ENCODE measurements at regions of chr6 and their contacts with region 1.

Region 1: DNA sequence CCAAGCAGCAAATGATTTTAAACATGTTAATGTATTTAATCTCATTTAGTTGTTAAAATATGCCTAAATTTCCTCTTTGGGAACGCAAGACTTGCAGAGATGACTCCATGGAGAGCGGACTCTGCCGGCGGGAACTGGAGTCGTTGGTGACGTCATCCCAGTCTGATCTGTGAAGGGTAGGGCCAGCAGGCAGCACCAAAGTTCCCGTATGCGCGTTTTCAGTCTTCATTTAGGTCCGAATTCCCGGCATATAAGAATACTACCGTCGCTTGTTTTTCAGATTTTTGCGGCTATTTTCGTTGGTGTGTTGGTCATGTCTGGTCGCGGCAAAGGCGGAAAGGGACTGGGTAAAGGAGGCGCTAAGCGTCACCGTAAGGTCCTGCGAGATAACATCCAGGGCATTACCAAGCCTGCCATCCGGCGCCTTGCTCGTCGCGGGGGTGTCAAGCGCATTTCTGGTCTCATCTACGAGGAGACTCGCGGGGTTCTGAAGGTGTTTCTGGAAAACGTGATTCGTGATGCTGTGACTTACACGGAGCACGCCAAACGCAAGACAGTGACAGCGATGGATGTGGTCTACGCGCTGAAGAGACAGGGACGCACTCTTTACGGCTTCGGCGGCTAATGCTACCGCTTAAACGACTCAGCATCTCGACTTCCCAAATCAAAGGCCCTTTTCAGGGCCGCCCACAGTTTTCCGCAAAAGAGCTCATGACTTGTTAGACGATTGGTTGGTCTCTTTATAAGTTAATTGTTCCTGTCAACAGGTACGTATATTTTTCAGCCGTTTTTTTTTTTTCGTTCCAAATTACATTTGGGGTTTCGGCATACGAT is 117.3 kb downstream of the HFE start:
- DNase-seq: peak; percentile 95
- H3K4me3 ChIP-seq: peak overlapping the region; percentile 60 to 77 (median 64)
- H3K27ac ChIP-seq: peak overlapping the region; percentile 93 to 100 (median 97)
- H3K4me1 ChIP-seq: peaks cover 0 to 25% (median 13%) of the 10 kb centered on the region in 4 donors
- H3K27me3 ChIP-seq: no peaks in the 10 kb centered on the region
- CTCF ChIP-seq: peak in 4 of 5 experiments; percentile 15 to 55 (median 33)
- EP300 ChIP-seq: peak; percentile 79
- POLR2A ChIP-seq: peak; percentile 100

Region 2: DNA sequence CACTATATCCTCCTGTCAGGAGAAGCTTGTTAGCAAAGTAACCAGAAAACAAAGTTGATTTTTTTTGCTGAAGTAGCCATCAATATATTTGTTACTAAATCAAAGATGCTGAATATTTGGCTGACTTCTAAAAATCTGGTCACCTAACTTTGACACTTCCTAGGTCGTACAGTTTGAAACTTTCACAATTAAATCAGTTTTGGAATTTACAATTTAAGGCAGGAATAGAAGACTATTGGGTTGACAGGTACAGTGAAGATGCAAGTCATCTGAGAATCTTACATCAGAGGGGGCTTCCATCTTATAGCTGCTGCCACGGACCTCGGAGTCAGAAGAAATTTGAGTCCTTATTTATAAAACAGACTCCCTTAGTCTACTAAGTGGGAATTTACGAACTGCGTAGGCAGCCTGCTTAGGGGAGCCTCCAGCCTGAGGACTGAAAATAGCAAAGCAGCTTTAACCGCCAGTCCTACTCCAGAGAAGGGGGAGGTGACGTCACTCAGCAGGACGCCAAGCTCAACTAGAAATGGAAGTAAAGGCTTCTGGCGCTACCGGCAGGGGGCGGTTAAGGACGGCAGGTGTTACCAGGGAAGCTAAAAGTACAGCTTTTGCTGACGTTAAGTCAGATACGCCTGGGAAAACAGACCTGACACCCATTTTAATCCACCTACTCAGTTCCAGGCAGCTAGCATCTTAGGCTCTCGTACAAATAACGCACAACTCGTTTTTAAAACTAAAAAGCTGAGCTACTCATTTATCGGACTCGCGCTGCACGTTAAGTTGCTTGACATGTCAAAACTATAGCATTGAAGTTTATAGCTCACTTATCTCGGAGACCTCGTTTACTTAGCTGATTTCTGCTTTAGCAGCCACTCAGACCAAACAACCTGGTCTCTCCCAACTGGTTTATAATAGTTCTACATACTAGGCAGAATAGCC is 178.4 kb before region 1 on chr6:
- in situ Hi-C with region 1: loop called in 1 of 4 experiments (anchors 10 kb)
- intact Hi-C with region 1: loop called (anchors 10 kb)
- DNase-seq: peak; percentile 98
- H3K4me3 ChIP-seq: peak overlapping the region; percentile 48 to 66 (median 55)
- H3K27ac ChIP-seq: peak overlapping the region; percentile 90 to 98 (median 96)
- H3K4me1 ChIP-seq: peaks cover 0 to 25% (median 18%) of the 10 kb centered on the region in 4 donors
- H3K27me3 ChIP-seq: no peaks in the 10 kb centered on the region
- CTCF ChIP-seq: peak; percentile 73 to 97 (median 88)
- EP300 ChIP-seq: no peak
- POLR2A ChIP-seq: no peak

Region 3: DNA sequence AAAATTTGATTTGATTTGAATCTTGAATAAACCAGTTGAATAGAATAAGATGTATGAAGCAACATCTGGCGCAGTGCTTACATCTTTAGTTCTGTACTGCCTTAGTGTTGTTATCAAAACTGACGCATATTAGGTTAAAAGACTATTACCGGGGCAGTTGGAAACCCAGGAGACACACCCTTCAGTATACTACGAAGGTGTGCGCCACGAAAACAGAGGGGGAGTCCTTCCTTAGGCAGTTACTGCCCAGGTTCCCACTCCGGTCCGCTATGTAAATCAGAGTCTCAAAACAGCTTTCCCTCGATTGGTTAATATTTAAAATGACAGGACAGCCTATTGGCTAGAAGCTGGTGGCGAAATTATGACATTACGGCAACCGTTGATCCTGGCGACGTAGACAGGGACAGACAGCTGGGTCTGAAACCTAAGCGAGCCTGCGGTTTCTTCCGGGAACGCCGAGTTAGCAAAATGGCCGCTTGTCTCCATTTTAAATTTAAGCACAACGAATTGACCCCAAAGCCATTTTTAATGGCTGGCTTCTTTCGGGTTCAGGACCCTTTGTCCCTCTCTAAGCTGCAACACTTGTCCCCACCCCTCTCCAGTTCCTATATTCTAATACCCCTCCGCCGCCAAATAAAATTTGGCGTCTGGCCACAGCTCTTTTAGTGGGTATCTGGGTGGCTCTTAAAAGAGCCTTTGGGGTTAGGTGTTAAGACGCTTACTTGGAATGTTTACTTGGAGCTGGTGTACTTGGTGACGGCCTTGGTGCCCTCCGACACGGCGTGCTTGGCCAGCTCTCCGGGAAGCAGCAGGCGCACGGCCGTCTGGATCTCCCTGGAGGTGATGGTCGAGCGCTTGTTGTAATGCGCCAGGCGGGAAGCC is 81.5 kb before region 1 on chr6:
- in situ Hi-C with region 1: no loop called
- intact Hi-C with region 1: loop called (anchors 5 kb)
- DNase-seq: peak; percentile 97
- H3K4me3 ChIP-seq: peak overlapping the region; percentile 59 to 84 (median 70)
- H3K27ac ChIP-seq: peak overlapping the region; percentile 93 to 99 (median 98)
- H3K4me1 ChIP-seq: peaks cover 6 to 21% (median 20%) of the 10 kb centered on the region in 4 donors
- H3K27me3 ChIP-seq: no peaks in the 10 kb centered on the region
- CTCF ChIP-seq: peak in 1 of 5 experiments; percentile 15
- EP300 ChIP-seq: peak; percentile 97
- POLR2A ChIP-seq: peak; percentile 89

Region 4: DNA sequence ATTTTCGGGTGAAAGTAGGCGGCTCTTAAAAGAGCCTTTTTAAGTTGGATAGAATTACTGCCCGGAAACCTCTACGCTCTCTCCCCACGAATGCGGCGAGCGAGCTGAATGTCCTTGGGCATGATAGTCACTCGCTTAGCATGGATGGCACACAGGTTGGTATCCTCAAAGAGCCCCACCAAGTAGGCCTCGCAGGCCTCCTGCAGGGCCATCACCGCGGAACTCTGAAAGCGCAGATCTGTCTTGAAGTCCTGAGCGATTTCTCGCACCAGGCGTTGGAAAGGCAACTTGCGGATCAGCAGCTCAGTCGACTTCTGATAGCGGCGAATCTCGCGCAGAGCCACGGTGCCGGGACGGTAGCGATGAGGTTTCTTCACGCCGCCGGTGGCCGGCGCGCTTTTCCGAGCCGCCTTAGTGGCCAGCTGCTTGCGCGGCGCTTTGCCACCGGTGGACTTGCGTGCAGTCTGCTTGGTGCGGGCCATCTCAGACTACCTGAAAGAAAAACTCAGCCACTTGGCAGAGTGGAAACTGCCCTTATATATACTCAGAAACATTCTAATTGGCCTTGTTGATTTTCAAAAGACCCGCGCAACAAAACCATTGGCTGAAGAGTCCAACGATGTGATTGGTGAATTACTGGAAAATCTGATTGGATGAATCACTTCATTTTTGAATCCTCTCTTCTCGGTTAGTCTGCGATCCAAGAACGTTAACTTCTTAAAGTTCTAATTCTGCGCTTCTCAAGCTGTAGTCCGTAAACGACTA is 66.5 kb after region 1 on chr6:
- in situ Hi-C with region 1: no loop called
- intact Hi-C with region 1: loop called (anchors 10 kb)
- DNase-seq: peak; percentile 69
- H3K4me3 ChIP-seq: peak overlapping the region in 3 of 4 donors; percentile 33 to 59 (median 48)
- H3K27ac ChIP-seq: peak overlapping the region; percentile 88 to 96 (median 92)
- H3K4me1 ChIP-seq: peaks cover 0 to 28% (median 10%) of the 10 kb centered on the region in 4 donors
- H3K27me3 ChIP-seq: no peaks in the 10 kb centered on the region
- CTCF ChIP-seq: peak in 1 of 5 experiments; percentile 12
- EP300 ChIP-seq: no peak
- POLR2A ChIP-seq: peak; percentile 52

Region 5: DNA sequence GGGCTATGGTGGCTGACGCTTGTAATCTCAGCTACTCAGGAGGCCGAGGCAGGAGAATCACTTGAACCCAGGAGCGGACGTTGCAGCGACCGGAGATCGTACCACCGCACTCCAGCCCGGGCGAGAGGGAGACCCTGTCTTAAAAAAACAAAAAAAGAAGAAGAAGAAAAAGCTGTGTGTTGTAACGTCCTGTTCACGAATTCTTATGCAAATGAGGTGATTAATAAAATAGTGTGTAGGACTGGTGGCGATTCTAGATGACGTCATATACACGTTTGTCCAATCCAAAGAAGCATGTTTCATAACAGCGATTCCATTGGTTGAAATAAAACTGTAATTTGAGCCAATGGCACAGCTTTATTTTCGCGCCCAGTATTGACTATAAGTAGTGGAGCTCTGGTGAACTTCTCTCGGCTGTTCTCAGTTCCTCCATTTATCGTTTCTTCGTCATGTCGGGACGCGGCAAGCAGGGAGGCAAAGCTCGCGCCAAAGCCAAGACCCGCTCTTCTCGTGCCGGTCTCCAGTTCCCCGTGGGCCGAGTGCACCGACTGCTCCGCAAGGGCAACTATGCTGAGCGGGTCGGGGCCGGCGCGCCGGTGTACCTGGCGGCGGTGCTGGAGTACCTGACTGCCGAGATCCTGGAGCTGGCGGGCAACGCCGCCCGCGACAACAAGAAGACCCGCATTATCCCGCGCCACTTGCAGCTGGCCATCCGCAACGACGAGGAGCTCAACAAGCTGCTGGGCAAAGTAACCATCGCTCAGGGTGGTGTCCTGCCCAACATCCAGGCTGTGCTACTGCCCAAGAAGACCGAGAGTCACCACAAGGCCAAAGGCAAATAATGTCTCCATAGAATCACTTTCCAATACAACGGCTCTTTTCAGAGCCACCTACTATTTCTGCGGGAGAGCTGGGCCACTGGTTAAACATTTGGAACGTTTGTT is 1660.6 kb after region 1 on chr6:
- in situ Hi-C with region 1: no loop called
- intact Hi-C with region 1: no loop called
- DNase-seq: peak; percentile 67
- H3K4me3 ChIP-seq: peak overlapping the region; percentile 37 to 88 (median 71)
- H3K27ac ChIP-seq: peak overlapping the region; percentile 67 to 90 (median 80)
- H3K4me1 ChIP-seq: peaks cover 7 to 36% (median 25%) of the 10 kb centered on the region in 4 donors
- H3K27me3 ChIP-seq: peaks cover 33% of the 10 kb centered on the region
- CTCF ChIP-seq: peak in 1 of 5 experiments; percentile 1
- EP300 ChIP-seq: no peak
- POLR2A ChIP-seq: peak; percentile 91

Measured in transverse colon (tissue), 4 donors.